ENCODE measurements at regions of chr1 and their contacts with region 1.

Region 1: GRCh38 chr1:159089184-159089791 is 12.7 kb upstream of the AIM2 start:
- DNase-seq: no peak
- H3K4me3 Mint-ChIP-seq: no peak overlapping the region
- H3K27ac Mint-ChIP-seq: peak overlapping the region; percentile 85
- H3K4me1 Mint-ChIP-seq: peaks cover 50% of the 10 kb centered on the region
- H3K27me3 Mint-ChIP-seq: no peaks in the 10 kb centered on the region

Region 2: DNA sequence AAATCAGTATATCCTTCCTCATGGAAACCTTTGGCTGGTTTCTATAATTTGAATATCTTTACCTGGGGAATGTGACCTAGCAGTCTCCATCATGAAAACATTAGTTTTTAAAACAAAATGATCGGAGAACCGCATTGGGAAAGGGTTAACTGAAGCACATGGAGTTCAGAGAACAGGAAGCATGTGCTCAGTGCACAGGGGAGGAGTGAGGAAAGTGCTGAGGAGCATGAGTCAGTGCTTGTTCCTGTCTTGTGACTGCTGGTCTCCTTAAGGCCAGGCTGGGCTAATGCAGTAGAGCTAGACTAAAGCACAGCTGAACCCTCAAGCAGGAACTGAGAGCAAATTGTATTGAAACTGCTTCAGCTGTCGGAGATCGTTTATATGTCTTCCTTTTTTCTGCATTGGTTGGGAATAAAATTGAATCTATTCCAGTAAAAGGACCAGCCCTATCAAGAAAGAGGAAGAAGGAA is 73.8 kb before region 1 on chr1:
- intact Hi-C with region 1: no loop called
- DNase-seq: peak; percentile 68
- H3K4me3 Mint-ChIP-seq: peak overlapping the region; percentile 91
- H3K27ac Mint-ChIP-seq: peak overlapping the region; percentile 98
- H3K4me1 Mint-ChIP-seq: peaks cover 60% of the 10 kb centered on the region
- H3K27me3 Mint-ChIP-seq: no peaks in the 10 kb centered on the region

Region 3: GRCh38 chr1:159077120-159077961 is 11.9 kb before region 1 on chr1:
- intact Hi-C with region 1: loop called (anchors 1 kb)
- DNase-seq: peak; percentile 95
- H3K4me3 Mint-ChIP-seq: peak overlapping the region; percentile 89
- H3K27ac Mint-ChIP-seq: peak overlapping the region; percentile 98
- H3K4me1 Mint-ChIP-seq: peaks cover 37% of the 10 kb centered on the region
- H3K27me3 Mint-ChIP-seq: no peaks in the 10 kb centered on the region